ENCODE measurements at regions of chr2 and their contacts with region 1.

Region 1: GRCh38 chr2:62456721-62457539 is 49.1 kb downstream of the TMEM17 start:
- DNase-seq: peak; percentile 77 to 89
- H3K4me3 ChIP-seq: peak overlapping the region; percentile 59 to 75 (median 66)
- H3K27ac ChIP-seq: peak overlapping the region; percentile 66 to 88 (median 78)
- H3K4me1 ChIP-seq: peaks cover 7 to 21% (median 17%) of the 10 kb centered on the region in 4 donors
- H3K27me3 ChIP-seq: no peaks in the 10 kb centered on the region
- CTCF ChIP-seq: peak in 6 of 7 experiments; percentile 42 to 100 (median 98)
- EP300 ChIP-seq: no peak
- POLR2A ChIP-seq: no peak

Region 2: DNA sequence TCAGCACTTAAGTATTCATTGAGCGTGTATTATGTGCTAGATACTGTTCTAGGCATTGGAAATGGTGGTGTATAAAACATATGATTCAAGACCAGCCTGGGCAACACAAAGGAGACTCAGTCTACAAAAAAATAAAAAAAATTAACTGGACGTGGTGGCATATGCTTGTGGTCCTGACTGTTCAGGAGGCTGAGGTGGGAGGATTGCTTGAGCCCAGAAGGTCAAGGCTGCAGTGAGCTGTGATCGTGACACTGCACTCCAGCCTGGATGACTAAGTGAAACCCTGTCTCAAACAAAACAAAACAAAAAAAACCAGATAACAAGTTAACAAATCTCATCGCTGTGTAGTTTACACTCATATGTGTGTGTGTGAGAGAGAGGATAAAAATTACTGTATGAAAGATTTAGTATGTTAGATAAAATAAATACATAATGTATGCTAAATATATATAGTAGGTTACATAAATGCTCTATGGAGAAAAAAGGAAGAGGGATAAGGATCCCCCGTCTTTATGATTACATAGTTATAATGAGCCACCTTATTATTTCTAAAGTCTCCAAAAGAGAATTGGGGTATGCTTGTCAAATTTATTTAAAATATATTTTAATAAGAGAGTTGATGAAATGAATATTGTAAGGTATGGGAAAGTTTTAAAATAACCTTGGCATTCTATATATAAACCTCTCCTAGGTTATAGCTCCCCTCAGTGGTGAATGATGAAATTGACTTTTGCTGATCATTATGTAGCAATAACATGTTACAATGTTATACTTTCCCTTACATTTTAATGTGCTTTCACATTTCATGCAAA is 317.8 kb after region 1 on chr2:
- intact Hi-C with region 1: loop called (anchors 5 kb)
- DNase-seq: peak in 1 of 2 donors; percentile 71
- H3K4me3 ChIP-seq: no peak overlapping the region
- H3K27ac ChIP-seq: peak overlapping the region in 1 of 5 donors; percentile 27
- H3K4me1 ChIP-seq: peaks cover 0 to 20% (median 5%) of the 10 kb centered on the region in 4 donors
- H3K27me3 ChIP-seq: no peaks in the 10 kb centered on the region
- CTCF ChIP-seq: peak in 5 of 7 experiments; percentile 50 to 74 (median 67)
- EP300 ChIP-seq: no peak
- POLR2A ChIP-seq: no peak